ENCODE measurements at regions of chr9 and their contacts with region 1.

Region 1: DNA sequence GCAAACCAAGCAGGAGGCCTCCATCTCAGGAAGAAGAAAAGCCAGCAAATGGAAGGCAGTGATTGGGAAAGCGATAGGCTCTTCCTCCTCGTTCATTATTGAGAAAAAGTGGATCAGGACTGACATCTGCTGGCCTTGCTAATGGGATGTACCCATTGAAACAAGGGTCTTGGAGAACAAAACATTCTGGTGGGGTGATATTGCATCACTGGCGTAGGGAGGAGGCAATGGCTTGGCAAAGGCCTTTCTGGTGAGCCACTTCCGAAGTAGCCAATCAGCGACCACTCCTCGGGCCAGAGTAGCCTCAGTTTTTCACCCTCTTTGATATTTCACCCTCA is 86.7 kb upstream of the NFIB start:
- DNase-seq: peak; percentile 90
- H3K4me3 ChIP-seq: no peak overlapping the region
- H3K27ac ChIP-seq: peak overlapping the region; percentile 80
- H3K4me1 ChIP-seq: peaks cover 16% of the 10 kb centered on the region
- H3K27me3 ChIP-seq: no peaks in the 10 kb centered on the region
- CTCF ChIP-seq: peak; percentile 58
- POLR2A ChIP-seq: no peak

Region 2: DNA sequence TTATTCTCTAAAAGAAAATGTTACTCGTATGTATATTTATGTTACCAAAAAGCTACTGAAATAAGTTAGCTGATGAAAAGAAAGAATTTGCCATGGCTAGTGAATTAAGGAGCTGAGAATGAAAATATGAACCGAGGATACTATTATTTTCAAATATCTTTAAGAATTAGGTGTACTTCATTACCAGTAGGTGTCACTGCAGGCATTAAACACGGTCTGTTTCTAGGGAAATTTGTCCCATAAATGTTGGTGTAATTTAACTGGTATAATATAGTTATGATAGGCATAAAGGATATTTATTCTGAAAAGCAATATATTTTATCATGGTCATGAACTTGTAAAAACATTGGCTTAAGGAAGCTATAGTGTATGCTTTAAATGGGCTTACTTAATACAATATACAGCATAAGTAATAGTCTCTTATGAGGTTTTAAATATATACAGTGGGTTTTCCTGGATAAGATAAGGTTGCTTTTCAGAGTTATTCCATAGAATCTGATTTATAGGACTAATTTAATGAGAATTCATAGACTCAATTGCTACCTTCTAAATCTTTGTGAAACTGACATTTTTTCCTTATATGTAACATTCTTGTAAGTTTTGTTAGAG is 1048.7 kb before region 1 on chr9:
- CTCF ChIA-PET with region 1: interaction called, 12 read pairs
- POLR2A ChIA-PET with region 1: no interaction called
- dilution Hi-C with region 1: no loop called
- intact Hi-C with region 1: loop called (anchors 2 kb)
- DNase-seq: peak; percentile 74
- H3K4me3 ChIP-seq: no peak overlapping the region
- H3K27ac ChIP-seq: no peak overlapping the region
- H3K4me1 ChIP-seq: no peaks in the 10 kb centered on the region
- H3K27me3 ChIP-seq: no peaks in the 10 kb centered on the region
- CTCF ChIP-seq: peak; percentile 32 to 37
- POLR2A ChIP-seq: no peak

Region 3: DNA sequence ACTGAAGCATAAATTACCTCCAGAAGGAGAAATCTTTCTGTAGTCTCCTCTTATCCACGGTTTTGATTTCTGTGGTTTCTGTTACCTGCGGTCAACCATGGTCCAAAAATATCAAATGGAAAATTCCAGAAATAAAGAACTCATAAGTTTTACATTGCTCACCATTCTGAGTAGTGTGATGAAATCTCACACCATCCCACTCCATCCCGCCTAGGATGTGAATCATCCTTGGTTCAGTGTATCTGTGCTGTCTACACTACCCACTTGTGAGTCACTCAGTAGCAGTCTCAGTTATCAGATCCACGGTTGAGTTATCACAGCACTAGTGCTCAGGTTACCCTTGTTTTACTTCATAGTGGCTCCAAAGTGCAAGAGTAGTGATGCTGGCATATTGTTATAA is 457.9 kb before region 1 on chr9:
- CTCF ChIA-PET with region 1: no interaction called
- POLR2A ChIA-PET with region 1: no interaction called
- dilution Hi-C with region 1: no loop called
- intact Hi-C with region 1: loop called (anchors 10 kb)
- DNase-seq: peak; percentile 81
- H3K4me3 ChIP-seq: no peak overlapping the region
- H3K27ac ChIP-seq: peak overlapping the region; percentile 44
- H3K4me1 ChIP-seq: peaks cover 33% of the 10 kb centered on the region
- H3K27me3 ChIP-seq: no peaks in the 10 kb centered on the region
- CTCF ChIP-seq: no peak
- POLR2A ChIP-seq: no peak

Region 4: GRCh38 chr9:14314929-14315645 is 85.5 kb before region 1 on chr9:
- CTCF ChIA-PET with region 1: interaction called, 5 read pairs
- POLR2A ChIA-PET with region 1: no interaction called
- dilution Hi-C with region 1: no loop called
- intact Hi-C with region 1: loop called (anchors 1 kb)
- DNase-seq: peak; percentile 67
- H3K4me3 ChIP-seq: peak overlapping the region; percentile 61 to 87 (median 85)
- H3K27ac ChIP-seq: peak overlapping the region; percentile 96
- H3K4me1 ChIP-seq: peaks cover 55% of the 10 kb centered on the region
- H3K27me3 ChIP-seq: no peaks in the 10 kb centered on the region
- CTCF ChIP-seq: no peak
- POLR2A ChIP-seq: no peak

Region 5: DNA sequence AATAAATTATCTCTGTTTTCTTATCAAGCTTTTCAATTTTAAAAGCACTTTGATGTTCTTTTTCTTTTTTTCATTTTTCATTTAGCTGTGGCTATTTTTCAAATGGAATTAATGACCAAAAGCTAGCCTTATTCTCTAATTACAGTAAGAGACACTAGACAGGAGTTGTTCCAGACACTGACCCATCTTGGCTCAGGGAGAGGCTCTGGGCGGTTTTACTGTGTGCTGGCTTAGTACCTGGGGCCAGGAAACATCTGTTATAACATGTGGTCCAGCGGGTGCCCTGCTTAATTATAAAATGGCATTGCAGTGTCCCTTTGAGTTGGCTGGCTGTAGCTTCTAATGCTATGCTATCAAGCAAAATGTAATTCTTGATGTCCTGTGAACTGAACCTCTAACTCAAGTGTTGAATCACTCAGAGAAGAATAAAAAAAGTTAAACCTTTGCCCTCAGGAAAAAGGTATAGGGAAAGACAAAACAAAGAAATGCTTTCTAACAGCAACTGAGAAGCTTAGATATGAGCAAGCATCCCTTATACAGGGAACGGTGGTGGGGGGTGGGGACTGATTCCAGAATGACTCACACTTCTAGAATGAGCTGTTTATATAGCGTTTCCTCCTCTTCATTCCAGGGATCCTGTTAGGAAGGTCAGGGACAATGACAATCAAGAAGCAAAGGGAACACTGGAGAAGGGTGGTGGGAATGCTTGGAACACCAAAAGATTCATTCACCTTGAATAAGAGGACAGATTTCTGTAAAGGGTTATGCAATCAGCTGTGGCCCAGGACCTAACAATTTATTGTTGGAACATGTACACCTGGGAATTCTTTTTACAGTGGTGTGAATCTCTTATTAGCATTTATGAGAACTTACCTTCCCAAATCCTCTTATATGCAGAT is 27.9 kb before region 1 on chr9:
- CTCF ChIA-PET with region 1: interaction called, 17 read pairs
- POLR2A ChIA-PET with region 1: no interaction called
- dilution Hi-C with region 1: no loop called
- intact Hi-C with region 1: loop called (anchors 1 kb)
- DNase-seq: peak; percentile 98
- H3K4me3 ChIP-seq: peak overlapping the region in 1 of 3 experiments; percentile 29
- H3K27ac ChIP-seq: peak overlapping the region; percentile 96
- H3K4me1 ChIP-seq: peaks cover 36% of the 10 kb centered on the region
- H3K27me3 ChIP-seq: no peaks in the 10 kb centered on the region
- CTCF ChIP-seq: no peak
- POLR2A ChIP-seq: peak; percentile 70

Region 6: GRCh38 chr9:14428781-14429230 is 28.2 kb after region 1 on chr9:
- CTCF ChIA-PET with region 1: interaction called, 13 read pairs
- POLR2A ChIA-PET with region 1: no interaction called
- dilution Hi-C with region 1: no loop called
- intact Hi-C with region 1: no loop called
- DNase-seq: peak; percentile 68
- H3K4me3 ChIP-seq: no peak overlapping the region
- H3K27ac ChIP-seq: no peak overlapping the region
- H3K4me1 ChIP-seq: peaks cover 15% of the 10 kb centered on the region
- H3K27me3 ChIP-seq: no peaks in the 10 kb centered on the region
- CTCF ChIP-seq: peak; percentile 79 to 84
- POLR2A ChIP-seq: no peak

Measured in endothelial cell of umbilical vein (primary cell).